Breast epithelium (tissue), 4 donors: ENCODE measurements at regions of chr1 and their contacts with region 1.

Region 1: DNA sequence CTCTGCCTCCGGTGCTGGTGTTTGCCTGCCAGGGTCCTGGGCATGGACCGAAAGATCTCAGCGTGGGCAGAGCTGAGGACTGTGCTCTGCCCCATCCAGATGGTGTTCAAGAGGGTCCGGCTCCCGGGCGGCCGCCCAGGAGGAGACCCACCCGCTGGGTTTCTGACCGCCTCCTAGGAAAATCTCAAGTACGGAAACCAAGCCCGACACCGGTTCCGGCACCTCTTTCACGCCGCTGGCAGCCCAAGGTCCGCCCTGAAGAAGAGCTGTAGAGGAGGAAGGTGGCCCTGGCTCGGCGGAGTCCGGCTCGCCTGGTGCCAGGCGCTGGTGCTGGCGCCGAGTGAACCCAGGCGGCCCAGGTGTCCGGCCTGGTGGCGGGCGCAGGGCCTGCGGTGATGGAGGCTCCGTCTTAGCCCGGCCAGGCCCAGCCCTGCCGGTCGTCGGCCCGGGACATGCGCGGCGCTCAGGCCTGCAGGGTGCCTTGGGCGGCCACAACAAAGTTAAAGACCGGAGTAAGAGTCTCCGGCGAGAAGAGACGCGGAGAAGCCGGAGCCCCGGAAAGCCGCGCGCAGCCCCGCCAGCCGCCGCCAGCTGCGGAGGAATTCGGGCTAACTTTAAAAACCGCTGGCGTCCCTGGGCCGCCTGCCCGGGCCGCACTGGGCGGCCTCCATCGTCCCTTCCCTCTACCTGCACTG is 1.5 kb downstream of the GRIK3 start:
- DNase-seq: no peak
- H3K4me3 ChIP-seq: peak overlapping the region in 2 of 3 donors; percentile 48 to 72
- H3K27ac ChIP-seq: no peak overlapping the region
- H3K4me1 ChIP-seq: peaks cover 0 to 7% of the 10 kb centered on the region in 2 donors
- H3K27me3 ChIP-seq: peaks cover 0 to 44% of the 10 kb centered on the region in 2 donors
- CTCF ChIP-seq: no peak
- POLR2A ChIP-seq: no peak

Region 2: DNA sequence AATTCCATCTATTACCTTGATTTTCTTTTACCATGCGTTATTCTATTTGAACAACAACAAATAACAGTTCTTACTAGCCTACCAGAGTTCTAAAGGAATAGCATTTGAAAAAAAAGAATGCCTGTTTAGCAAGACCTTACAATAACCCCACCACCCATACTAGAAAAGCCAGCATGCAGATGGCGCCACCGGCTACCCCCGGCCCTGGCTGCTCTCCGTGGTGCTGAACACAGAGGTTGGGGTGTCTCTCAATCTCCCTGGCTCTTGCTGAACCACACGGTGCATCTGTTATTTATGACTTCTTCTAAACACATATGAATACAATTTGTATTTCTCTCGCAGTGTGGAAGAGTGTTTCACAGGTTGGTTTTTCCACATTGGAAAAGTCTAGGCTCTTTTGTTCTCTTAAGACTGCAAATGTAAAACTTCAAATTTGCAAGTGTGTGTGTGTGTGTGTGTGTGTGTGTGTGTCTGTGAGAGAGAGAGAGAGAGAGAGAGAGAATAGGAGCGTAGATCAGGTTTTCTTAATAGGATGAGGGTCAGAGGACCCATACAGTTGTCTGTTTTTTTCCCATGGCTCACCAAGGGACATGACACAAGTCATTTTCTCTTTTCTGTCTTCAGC is 12.0 kb before region 1 on chr1:
- intact Hi-C with region 1: loop called (anchors 1 kb)
- DNase-seq: no peak
- H3K4me3 ChIP-seq: no peak overlapping the region
- H3K27ac ChIP-seq: no peak overlapping the region
- H3K4me1 ChIP-seq: no peaks in the 10 kb centered on the region
- H3K27me3 ChIP-seq: no peaks in the 10 kb centered on the region
- CTCF ChIP-seq: no peak
- POLR2A ChIP-seq: no peak

Region 3: DNA sequence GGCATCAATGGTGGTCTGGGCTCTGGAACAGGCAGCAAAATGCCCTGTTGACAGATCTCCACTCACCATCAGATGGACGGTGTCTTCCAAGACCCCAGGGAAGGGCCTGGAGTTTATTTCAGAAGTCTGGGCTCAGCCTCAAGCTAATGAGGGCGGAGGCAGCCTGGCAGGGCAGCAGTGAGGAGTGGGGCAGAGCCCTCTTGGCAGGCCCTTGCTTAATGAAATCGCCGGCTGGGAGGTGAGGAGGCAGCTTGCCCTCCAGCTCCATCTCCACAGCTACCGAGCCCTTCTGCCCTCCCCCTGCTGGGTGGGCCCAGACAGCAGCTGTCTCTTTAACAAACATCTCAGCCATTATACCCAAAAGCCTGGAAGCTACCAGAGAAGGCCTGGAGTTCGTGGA is 23.5 kb after region 1 on chr1:
- intact Hi-C with region 1: loop called (anchors 1 kb)
- DNase-seq: no peak
- H3K4me3 ChIP-seq: no peak overlapping the region
- H3K27ac ChIP-seq: peak overlapping the region in 1 of 2 donors; percentile 33
- H3K4me1 ChIP-seq: no peaks in the 10 kb centered on the region
- H3K27me3 ChIP-seq: no peaks in the 10 kb centered on the region
- CTCF ChIP-seq: no peak
- POLR2A ChIP-seq: no peak